ENCODE measurements at regions of chr13 and their contacts with region 1.

Region 1: GRCh38 chr13:110715395-110716235 is 2.1 kb downstream of the ING1 start:
- DNase-seq: peak; percentile 99
- ATAC-seq: peak; percentile 73
- H3K4me3 ChIP-seq: peak overlapping the region; percentile 88 to 93
- H3K27ac ChIP-seq: peak overlapping the region; percentile 73
- H3K4me1 ChIP-seq: peaks cover 15 to 32% of the 10 kb centered on the region in 2 experiments; a peak in 3 of 4 replicates
- H3K27me3 ChIP-seq: no peaks in the 10 kb centered on the region
- CTCF ChIP-seq: 0 out of 6 replicates have a peak, but pooled peaks of 1 of the 3 experiments have one; percentile 18
- POLR2A ChIP-seq: no peak
- RAD21 ChIP-seq: no peak

Region 2: DNA sequence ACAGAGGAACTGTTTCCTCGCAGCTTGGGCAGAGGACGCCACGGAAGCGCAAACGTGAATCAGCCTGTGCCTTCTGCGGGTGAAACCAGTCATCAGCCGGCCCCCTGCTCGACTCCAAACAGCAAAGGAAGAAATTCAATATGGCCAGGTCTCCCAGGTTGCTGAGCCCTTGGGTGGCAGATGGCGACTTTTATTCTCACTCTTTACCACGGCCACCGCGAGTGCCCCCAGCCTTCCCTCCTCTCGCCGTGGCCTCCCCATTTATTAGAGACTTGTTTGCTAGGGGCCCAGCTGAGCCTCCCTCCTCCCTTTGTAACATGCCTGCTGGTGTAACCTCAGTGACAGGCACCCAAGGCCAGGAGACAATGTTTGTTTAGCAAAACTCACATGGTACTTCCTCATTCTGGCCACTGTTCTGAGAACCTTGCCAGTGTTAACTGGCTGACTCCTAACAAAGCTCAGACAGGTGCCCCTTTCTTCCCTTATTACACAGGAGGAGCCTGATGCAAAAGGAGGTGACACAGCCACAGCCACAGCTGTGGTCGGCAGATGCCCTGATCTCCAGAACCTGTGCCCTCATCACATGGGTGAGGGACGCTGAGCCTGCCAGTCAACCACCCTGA is 159.9 kb before region 1 on chr13:
- CTCF ChIA-PET with region 1: no interaction called
- POLR2A ChIA-PET with region 1: no interaction called
- RAD21 ChIA-PET with region 1: no interaction called
- intact Hi-C with region 1: no loop called
- DNase-seq: no peak
- ATAC-seq: no peak
- H3K4me3 ChIP-seq: no peak overlapping the region
- H3K27ac ChIP-seq: no peak overlapping the region; the same call in 1 of the 2 replicates
- H3K4me1 ChIP-seq: peaks cover 5 to 7% of the 10 kb centered on the region in 2 experiments; a peak in 3 of 4 replicates
- H3K27me3 ChIP-seq: no peaks in the 10 kb centered on the region
- CTCF ChIP-seq: no peak
- POLR2A ChIP-seq: no peak
- RAD21 ChIP-seq: no peak

Region 3: GRCh38 chr13:110965038-110965754 is 249.6 kb after region 1 on chr13:
- CTCF ChIA-PET with region 1: no interaction called
- POLR2A ChIA-PET with region 1: interaction called, 3 read pairs
- RAD21 ChIA-PET with region 1: no interaction called
- intact Hi-C with region 1: loop called (anchors 10 kb)
- DNase-seq: peak; percentile 99
- ATAC-seq: peak; percentile 86
- H3K4me3 ChIP-seq: peak overlapping the region in 1 of 2 experiments; percentile 27; a peak in 2 of 4 replicates
- H3K27ac ChIP-seq: peak overlapping the region; percentile 99
- H3K4me1 ChIP-seq: peaks cover 43 to 95% of the 10 kb centered on the region in 2 experiments
- H3K27me3 ChIP-seq: no peaks in the 10 kb centered on the region
- CTCF ChIP-seq: no peak
- POLR2A ChIP-seq: no peak
- RAD21 ChIP-seq: no peak

Measured in HCT116 (cell line).